ENCODE measurements at regions of chrX and their contacts with region 1.

Region 1: DNA sequence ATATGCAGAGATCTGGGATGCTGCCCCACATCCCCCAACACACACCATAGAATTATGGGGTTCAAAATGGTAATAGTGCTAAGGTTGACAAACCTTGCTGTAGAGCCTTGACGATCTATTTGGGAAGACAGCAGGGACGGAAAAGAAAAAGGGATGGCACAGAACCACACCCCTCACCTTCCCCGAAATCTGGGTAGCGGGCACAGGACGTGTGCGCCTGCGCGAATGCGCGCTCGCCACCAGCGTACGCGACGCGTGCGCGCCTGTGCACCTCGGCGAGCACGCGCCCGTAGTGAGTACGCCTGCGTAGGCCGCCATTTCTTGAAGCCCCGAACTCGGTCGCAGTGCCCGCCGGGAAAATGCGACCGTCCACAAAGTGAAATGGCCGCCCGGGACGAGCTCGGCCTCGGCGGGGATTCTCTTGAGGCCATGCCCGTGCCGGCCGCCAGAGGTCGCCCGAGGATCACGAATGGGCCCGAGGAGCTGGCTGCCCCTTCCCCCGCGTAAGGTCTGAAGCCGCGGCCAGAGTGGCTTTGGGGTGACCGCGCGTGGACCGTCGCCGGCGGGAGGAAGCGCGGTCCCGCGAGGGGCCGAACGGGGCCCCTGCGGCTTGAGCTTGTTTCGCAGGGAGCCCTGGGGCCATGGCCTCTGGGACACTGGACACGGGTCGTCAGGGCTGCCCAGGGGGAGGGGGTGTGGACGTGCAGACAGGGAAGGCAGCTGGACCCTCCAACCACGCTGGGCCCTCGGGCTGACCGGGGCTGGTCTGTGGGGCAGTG is 43.6 kb downstream of the ZNF185 start:
- DNase-seq: peak; percentile 79 to 89
- ATAC-seq: peak; percentile 96 to 97
- H3K4me3 ChIP-seq: peak overlapping the region; percentile 49 to 83 (median 60)
- H3K27ac ChIP-seq: peak overlapping the region; percentile 73 to 92 (median 84)
- H3K4me1 ChIP-seq: peaks cover 0 to 8% of the 10 kb centered on the region in 2 donors
- H3K27me3 ChIP-seq: no peaks in the 10 kb centered on the region
- CTCF ChIP-seq: peak; percentile 75 to 97 (median 85)
- POLR2A ChIP-seq: no peak

Region 2: GRCh38 chrX:152656890-152657289 is 284.6 kb before region 1 on chrX:
- in situ Hi-C with region 1: no loop called
- intact Hi-C with region 1: no loop called
- DNase-seq: no peak
- ATAC-seq: no peak
- H3K4me3 ChIP-seq: no peak overlapping the region
- H3K27ac ChIP-seq: no peak overlapping the region
- H3K4me1 ChIP-seq: no peaks in the 10 kb centered on the region
- H3K27me3 ChIP-seq: no peaks in the 10 kb centered on the region
- CTCF ChIP-seq: no peak
- POLR2A ChIP-seq: no peak

Region 3: GRCh38 chrX:153032397-153033118 is 91.0 kb after region 1 on chrX:
- in situ Hi-C with region 1: no loop called
- intact Hi-C with region 1: loop called (anchors 5 kb)
- DNase-seq: peak; percentile 10 to 51
- ATAC-seq: peak; percentile 58 to 82
- H3K4me3 ChIP-seq: peak overlapping the region; percentile 31 to 42 (median 36)
- H3K27ac ChIP-seq: no peak overlapping the region
- H3K4me1 ChIP-seq: no peaks in the 10 kb centered on the region
- H3K27me3 ChIP-seq: no peaks in the 10 kb centered on the region
- CTCF ChIP-seq: peak; percentile 70 to 92 (median 82)
- POLR2A ChIP-seq: no peak

Region 4: DNA sequence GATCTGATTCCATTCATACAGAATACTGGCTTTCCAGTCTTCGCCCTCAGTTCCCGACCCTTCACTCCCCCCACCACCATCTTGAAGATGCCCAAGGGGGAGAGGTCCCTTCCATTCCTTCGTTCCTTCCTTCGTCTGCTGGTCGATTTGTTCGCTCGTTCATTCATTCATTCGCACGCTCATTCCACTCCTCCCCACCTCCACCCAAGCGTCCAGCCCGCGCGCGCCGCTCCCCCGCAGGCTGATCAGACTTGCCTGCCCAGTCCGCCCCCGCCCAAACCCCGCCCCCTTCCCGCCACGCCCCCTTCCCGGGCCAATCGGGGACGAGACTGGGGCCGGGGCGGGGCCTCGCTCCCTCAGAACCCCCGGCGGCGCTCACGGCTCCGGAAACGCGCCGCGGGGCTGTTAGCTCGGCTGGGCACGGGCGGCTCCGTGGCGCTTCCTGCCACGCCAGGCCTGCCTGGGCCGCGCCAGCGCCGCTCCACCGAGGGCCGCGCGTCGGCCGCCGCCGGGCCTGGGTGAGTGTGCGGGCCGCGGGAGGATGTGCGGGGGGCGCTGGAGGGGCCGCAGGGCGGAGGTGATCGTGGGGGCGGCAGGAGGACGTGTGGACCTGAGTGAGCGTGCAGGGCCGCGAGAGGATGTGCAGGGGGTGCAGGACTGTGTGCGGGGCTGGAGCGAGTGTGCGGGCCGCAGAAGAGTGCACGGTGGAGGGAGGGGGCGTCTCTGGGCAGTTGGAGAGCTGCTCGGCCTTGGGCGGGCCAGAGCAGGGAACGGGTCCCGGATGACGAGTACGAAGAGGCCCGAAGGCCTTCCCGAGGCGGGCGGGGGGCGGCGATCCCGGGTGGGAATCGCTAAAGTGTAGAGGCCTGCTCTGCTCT is 392.5 kb after region 1 on chrX and contains the start of gene ZNF275:
- in situ Hi-C with region 1: no loop called
- intact Hi-C with region 1: loop called (anchors 2 kb)
- DNase-seq: peak; percentile 45 to 69
- ATAC-seq: peak; percentile 94
- H3K4me3 ChIP-seq: peak within 1 kb of the TSS; percentile 60 to 74 (median 66)
- H3K27ac ChIP-seq: peak within 1 kb of the TSS; percentile 62 to 71 (median 64)
- H3K4me1 ChIP-seq: peaks cover 0 to 4% of the 10 kb centered on the region in 2 donors
- H3K27me3 ChIP-seq: no peaks in the 10 kb centered on the region
- CTCF ChIP-seq: no peak
- POLR2A ChIP-seq: peak; percentile 46 to 51
- total RNA-seq, gene ZNF275: 4.6 to 7.6 (median 5.0) TPM

Region 5: DNA sequence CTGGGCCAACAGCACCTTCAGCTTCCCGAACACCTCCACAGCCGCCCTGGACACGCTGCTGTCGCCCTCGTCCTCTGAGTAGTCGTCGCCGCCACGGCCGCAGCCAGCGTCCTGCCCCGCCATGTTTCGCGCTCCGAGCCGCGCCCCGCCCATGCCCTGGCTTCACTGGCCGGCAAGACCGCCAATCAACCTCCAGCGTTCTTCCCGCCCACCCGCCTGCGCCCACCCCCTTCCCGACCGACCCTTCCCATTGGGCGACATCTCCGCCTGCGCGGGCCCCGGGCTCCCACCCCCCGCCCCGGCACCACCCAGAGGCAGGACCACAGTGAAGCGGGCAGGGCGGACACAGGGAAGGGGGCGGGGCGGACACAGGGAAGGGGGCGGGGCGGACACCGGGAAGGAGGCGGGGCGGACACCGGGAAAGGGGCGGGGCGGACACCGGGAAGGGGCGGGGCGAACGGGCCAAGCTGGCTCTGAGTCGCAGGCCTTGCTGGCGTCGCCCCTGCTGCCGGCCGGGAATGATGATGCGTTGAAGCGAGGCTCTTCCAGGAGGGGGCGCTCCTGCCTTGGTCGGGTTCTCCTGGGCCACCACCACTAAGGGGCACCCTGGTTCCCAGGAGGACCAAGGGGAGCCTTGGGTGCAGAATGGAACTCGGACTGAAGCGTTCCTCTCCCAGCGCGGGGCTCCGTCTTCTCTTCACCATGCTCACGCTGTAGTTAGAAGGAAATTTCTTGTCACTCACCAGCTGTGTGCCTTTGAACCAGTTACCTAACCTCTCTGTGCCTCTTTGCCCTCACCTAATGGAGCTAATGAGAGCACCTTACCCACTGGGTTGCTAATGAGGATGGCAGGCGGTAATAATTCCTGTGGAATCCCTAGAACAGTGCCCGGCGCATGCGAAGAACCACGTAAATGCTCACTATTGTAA is 529.2 kb after region 1 on chrX and contains the start of gene HAUS7:
- in situ Hi-C with region 1: loop called in 1 of 4 experiments (anchors 25 kb)
- intact Hi-C with region 1: loop called (anchors 1 kb)
- DNase-seq: peak; percentile 76 to 86
- ATAC-seq: peak; percentile 87 to 89
- H3K4me3 ChIP-seq: peak within 1 kb of the TSS; percentile 56 to 71 (median 61)
- H3K27ac ChIP-seq: peak within 1 kb of the TSS; percentile 66 to 81 (median 78)
- H3K4me1 ChIP-seq: peaks cover 0 to 9% of the 10 kb centered on the region in 2 donors
- H3K27me3 ChIP-seq: no peaks in the 10 kb centered on the region
- CTCF ChIP-seq: peak; percentile 37 to 69 (median 63)
- POLR2A ChIP-seq: no peak
- total RNA-seq, gene HAUS7: 10.6 to 19.8 (median 13.2) TPM

Region 6: DNA sequence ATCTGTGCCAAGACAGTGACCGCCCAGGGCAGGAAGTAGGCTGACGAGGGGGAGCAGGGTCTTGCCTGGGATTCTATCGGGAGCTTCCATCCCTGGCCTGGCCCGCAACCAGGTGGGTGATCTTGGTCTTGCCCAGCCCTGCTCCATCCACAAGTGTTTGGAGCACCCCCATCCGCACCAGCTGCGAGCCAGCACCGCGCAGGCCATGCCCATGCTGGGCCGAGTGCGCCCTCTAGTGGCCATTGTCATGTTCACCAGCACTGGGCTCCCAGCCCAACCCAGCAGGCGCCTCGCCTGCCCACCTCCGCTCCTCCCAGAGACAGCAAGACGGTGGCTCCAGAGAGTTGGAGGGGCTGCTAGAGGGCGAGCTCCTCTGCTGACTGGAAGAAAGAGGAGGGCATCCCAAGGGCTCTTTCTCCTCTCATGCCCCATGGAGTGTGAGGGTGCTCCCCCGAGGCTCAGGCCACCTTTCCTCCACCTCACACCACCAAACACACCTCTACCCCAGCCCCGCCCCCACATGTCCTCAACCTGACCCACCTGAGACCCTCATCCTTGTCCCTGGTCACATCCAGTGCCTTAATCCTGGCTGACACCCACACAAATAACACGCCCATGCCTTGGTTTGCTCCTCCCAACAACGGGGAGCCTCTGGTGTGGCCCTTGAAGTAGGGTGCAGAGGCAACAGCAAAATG is 566.1 kb after region 1 on chrX:
- in situ Hi-C with region 1: no loop called
- intact Hi-C with region 1: loop called (anchors 5 kb)
- DNase-seq: peak; percentile 40 to 68
- ATAC-seq: peak; percentile 79 to 89
- H3K4me3 ChIP-seq: no peak overlapping the region
- H3K27ac ChIP-seq: no peak overlapping the region
- H3K4me1 ChIP-seq: no peaks in the 10 kb centered on the region
- H3K27me3 ChIP-seq: no peaks in the 10 kb centered on the region
- CTCF ChIP-seq: peak; percentile 51 to 89 (median 82)
- POLR2A ChIP-seq: no peak

Region 7: GRCh38 chrX:153782313-153782712 is 840.8 kb after region 1 on chrX:
- in situ Hi-C with region 1: no loop called
- intact Hi-C with region 1: no loop called
- DNase-seq: peak; percentile 30 to 81
- ATAC-seq: peak; percentile 35 to 65
- H3K4me3 ChIP-seq: peak overlapping the region in 1 of 4 donors; percentile 52
- H3K27ac ChIP-seq: peak overlapping the region; percentile 88 to 94 (median 90)
- H3K4me1 ChIP-seq: peaks cover 0 to 30% of the 10 kb centered on the region in 2 donors
- H3K27me3 ChIP-seq: no peaks in the 10 kb centered on the region
- CTCF ChIP-seq: peak in 3 of 5 experiments; percentile 13 to 44 (median 26)
- POLR2A ChIP-seq: no peak

Measured in gastrocnemius medialis (tissue), 4 donors.